Activated CD4-positive, alpha-beta T cell treated with anti-CD3 and anti-CD28 coated beads, Interleukin-2, amount 10 ng/mL, durations not matched to agents 7 days and 5 days (primary cell): ENCODE measurements at regions of chr19 and their contacts with region 1.

Region 1: DNA sequence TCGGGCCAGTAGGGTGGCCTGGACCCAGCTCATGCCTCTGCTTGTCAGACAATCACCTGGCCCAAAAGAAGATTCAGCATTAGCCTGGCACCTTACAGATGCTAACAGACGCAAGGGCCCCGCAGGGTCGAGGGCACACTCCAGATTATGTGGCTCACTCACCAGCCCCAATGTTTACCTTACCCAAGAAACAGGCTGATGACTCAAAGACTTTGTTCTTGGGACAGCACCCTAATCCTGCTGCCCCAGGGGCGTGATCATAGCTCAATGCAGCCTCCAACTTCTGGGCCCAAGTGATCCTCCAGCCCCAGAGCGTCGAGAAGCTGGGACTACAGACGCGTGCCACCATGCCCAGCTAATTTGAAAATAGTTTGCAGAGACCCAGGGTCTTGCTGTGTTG is 9.8 kb downstream of the ECSIT start:
- DNase-seq: no peak
- H3K4me3 Mint-ChIP-seq: no peak overlapping the region
- H3K27ac Mint-ChIP-seq: no peak overlapping the region
- H3K4me1 Mint-ChIP-seq: no peaks in the 10 kb centered on the region
- H3K27me3 Mint-ChIP-seq: no peaks in the 10 kb centered on the region

Region 2: DNA sequence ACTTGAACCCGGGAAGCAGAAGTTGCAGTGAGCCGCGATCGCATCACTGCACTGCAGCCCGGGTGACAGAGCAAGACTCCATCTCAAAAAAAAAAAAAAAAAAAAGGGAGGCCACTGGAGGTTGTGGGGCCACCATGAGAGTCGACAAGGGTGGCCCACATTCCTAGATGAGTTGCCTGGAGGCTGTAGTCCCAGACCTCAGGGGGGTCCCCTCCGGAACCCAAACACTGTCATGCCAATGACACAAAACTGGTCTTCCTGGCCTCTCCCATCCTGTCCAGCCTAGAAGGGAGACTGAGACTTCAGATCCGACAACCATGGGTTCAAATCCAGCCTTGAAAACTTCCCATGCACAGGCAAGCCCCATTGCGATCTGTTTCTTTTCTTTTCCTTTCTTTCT is 378.2 kb before region 1 on chr19:
- CTCF ChIA-PET with region 1: no interaction called
- POLR2A ChIA-PET with region 1: interaction called, 12 read pairs
- DNase-seq: no peak
- H3K4me3 Mint-ChIP-seq: no peak overlapping the region
- H3K27ac Mint-ChIP-seq: no peak overlapping the region
- H3K4me1 Mint-ChIP-seq: peaks cover 21% of the 10 kb centered on the region
- H3K27me3 Mint-ChIP-seq: peaks cover 1% of the 10 kb centered on the region

Region 3: DNA sequence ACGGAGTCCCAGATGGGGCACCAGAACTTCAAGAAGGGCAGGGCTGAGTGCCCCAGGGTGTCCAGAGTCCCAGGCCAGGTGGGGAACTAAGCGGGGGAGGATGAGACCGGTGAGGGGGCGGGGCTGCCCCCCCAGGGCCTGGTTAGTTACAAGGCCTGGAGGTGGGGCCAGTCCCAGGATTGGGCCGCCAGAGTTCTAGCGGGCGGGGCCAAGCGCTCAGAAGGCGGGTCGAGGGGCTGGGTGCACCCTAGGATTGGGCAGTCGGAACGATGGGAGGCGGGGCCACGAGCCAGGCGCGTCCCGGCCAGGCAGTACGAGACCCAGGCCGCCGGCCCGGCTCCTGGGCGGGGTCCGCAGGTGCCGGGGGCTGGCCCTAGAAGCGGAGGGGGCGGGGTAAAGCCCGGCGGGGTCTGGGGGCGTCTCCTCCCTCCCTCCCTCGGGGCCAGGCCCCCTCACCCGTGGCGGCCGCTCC is 14.1 kb before region 1 on chr19:
- CTCF ChIA-PET with region 1: no interaction called
- POLR2A ChIA-PET with region 1: no interaction called
- DNase-seq: peak; percentile 97
- H3K4me3 Mint-ChIP-seq: peak overlapping the region; percentile 87
- H3K27ac Mint-ChIP-seq: peak overlapping the region; percentile 94
- H3K4me1 Mint-ChIP-seq: peaks cover 27% of the 10 kb centered on the region
- H3K27me3 Mint-ChIP-seq: no peaks in the 10 kb centered on the region